Colonic mucosa (tissue), 4 donors: ENCODE measurements at regions of chr3 and their contacts with region 1.

Region 1: DNA sequence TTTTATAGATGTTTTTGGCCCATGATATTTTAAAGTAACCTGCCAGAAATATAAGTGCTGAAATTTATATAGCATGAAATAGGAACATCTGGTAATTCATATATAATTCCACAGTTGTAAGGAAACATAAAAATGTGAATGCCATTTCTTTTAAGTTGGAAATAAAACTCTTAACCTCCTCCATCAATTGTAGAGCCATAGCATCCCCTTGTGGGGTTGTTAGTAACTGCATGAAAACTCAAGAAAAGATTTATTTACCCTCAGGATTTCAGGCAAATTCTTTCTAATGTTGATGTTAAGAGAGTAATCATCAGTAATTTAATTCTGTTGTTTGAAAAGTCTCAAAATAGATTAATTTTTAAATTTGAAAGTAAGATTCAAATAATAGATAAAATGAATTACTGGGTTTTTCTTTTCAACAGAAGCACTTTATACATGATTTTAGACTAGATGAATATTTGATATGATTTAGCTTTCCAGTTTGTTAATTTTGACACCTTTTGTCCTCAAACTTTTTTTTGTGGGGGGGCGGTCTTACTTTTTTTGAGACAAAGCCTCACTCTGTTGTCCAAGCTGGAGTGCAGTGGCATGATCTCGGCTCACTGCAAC is 74.7 kb downstream of the RASA2 start:
- DNase-seq: peak; percentile 47
- H3K4me3 ChIP-seq: no peak overlapping the region
- H3K27ac ChIP-seq: no peak overlapping the region
- H3K4me1 ChIP-seq: no peaks in the 10 kb centered on the region
- H3K27me3 ChIP-seq: no peaks in the 10 kb centered on the region
- CTCF ChIP-seq: peak; percentile 86

Region 2: GRCh38 chr3:141303481-141304223 is 257.9 kb before region 1 on chr3:
- intact Hi-C with region 1: loop called (anchors 2 kb)
- DNase-seq: peak; percentile 80
- H3K4me3 ChIP-seq: no peak overlapping the region
- H3K27ac ChIP-seq: no peak overlapping the region
- H3K4me1 ChIP-seq: no peaks in the 10 kb centered on the region
- H3K27me3 ChIP-seq: no peaks in the 10 kb centered on the region
- CTCF ChIP-seq: peak; percentile 75

Region 3: GRCh38 chr3:141465221-141465620 is 96.3 kb before region 1 on chr3:
- intact Hi-C with region 1: loop called (anchors 2 kb)
- DNase-seq: no peak
- H3K4me3 ChIP-seq: no peak overlapping the region
- H3K27ac ChIP-seq: no peak overlapping the region
- H3K4me1 ChIP-seq: no peaks in the 10 kb centered on the region
- H3K27me3 ChIP-seq: no peaks in the 10 kb centered on the region
- CTCF ChIP-seq: no peak

Region 4: DNA sequence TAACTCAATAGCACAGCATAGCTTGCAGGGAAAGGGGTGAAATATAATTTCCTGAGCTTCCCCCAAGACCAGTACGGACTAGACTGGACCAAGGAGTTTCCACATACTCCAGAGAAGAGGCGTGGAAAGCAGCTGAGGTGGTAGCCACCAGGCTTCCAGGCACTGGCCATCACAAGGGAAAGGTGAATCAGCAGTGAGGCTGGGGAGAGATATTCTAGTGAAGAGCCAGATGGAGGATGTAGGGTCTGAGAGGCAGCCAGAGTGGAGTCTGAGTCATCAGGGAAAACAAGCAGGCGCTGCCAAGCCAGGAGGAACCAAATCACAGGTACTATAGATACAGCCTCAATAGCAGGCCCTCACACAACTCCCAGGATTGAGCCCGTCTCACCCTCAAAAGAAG is 84.3 kb before region 1 on chr3:
- intact Hi-C with region 1: loop called (anchors 5 kb)
- DNase-seq: no peak
- H3K4me3 ChIP-seq: no peak overlapping the region
- H3K27ac ChIP-seq: no peak overlapping the region
- H3K4me1 ChIP-seq: no peaks in the 10 kb centered on the region
- H3K27me3 ChIP-seq: no peaks in the 10 kb centered on the region
- CTCF ChIP-seq: no peak

Region 5: DNA sequence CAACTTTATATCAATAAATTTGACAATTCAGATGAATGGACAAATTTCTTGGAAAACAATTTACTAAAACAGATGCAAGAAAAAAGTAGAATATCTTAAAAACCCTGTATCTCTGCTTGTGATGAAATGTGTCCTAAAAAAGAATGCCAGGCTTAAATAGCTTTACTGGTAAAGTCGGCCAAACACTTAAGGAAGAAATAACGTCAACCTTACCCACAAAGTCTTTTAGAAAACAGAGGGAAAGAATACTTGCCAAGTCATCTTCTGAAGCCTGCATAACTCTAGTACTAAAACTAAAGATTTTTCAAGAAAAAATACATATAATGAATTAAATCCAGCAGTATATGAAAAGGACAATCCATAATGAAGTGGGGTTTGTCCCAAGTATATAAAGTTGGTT is 36.4 kb after region 1 on chr3:
- intact Hi-C with region 1: no loop called
- DNase-seq: no peak
- H3K4me3 ChIP-seq: no peak overlapping the region
- H3K27ac ChIP-seq: no peak overlapping the region
- H3K4me1 ChIP-seq: no peaks in the 10 kb centered on the region
- H3K27me3 ChIP-seq: no peaks in the 10 kb centered on the region
- CTCF ChIP-seq: no peak

Region 6: DNA sequence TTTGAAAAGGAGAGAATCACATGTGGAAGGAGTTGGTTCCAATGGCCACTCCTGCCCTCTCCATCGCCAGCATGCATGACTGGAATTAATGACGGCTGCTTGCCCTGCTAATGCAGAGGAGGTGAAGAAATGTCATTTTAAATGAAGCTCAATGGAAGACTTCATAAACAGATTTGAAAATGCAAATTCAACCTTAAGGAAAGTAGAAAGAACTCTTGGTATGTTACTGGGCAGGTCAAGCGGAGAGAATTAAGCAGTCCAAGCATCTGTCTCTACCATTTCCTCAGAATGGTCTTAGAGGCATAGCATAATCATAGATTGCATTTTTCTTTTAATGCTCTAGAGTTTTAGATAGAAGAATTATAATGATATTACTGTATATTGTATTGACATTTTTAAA is 160.1 kb after region 1 on chr3:
- intact Hi-C with region 1: no loop called
- DNase-seq: no peak
- H3K4me3 ChIP-seq: no peak overlapping the region
- H3K27ac ChIP-seq: no peak overlapping the region
- H3K4me1 ChIP-seq: no peaks in the 10 kb centered on the region
- H3K27me3 ChIP-seq: no peaks in the 10 kb centered on the region
- CTCF ChIP-seq: no peak